ENCODE measurements at regions of chr10 and their contacts with region 1.

Region 1: DNA sequence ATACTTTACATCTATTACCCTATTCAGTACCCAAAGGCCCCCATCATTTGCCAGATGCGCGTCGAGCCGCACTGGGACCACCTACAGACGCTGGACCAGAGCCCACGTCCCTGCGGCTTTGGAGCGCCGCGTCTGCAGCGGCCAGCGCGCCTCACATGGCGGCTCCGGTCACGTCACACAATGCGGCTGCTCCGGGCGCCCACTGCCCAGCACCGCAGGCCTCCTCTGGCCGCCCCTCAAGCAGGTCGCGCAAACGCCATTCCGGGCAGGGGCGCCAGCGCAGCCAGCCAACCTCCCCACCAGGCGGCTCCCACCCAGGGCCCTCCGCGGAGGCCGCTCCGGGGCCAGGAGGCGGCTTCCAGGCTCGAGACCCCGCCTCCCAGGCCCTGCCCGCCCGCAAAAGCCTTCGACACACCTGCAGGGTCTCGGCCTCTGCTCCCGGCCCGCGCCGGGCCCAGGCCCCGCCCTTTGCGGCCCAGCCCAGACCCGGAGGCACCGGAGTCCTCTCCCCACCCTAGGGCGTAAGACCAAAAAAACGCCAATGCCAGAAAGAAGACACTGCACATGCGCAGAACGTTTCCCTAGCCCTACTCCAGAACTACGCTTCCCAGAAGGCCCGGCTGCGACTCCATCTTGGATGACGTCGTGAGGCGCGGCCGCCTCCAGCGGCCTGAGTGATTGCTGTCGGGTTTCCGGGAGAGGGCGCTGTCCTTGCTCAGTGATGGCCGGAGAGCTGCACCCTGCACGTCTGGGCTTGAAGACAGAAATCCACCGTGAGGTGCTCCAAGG is at the start of gene ZNF25:
- H3K4me3 Mint-ChIP-seq: peak within 1 kb of the TSS; percentile 92
- H3K27ac Mint-ChIP-seq: peak within 1 kb of the TSS; percentile 97
- H3K4me1 Mint-ChIP-seq: peaks cover 23% of the 10 kb centered on the region
- H3K27me3 Mint-ChIP-seq: no peaks in the 10 kb centered on the region

Region 2: GRCh38 chr10:37857287-37858211 is 118.7 kb before region 1 on chr10 and contains the start of gene ZNF248:
- intact Hi-C with region 1: loop called (anchors 1 kb)
- H3K4me3 Mint-ChIP-seq: peak within 1 kb of the TSS; percentile 81
- H3K27ac Mint-ChIP-seq: peak within 1 kb of the TSS; percentile 97
- H3K4me1 Mint-ChIP-seq: peaks cover 24% of the 10 kb centered on the region
- H3K27me3 Mint-ChIP-seq: peaks cover 4% of the 10 kb centered on the region

Measured in dendritic cell treated with granulocyte-macrophage colony-stimulating factor and Interleukin-4, amounts not matched to agents 40 ng/mL and 50 ng/mL, for 4 days (primary cell).